Head of caudate nucleus (tissue), 42 donors: ENCODE measurements at regions of chr16 and their contacts with region 1.

Region 1: GRCh38 chr16:56324406-56324805 is 100.9 kb downstream of the AMFR start:
- DNase-seq: peak in 4 of 42 donors; percentile 44 to 72 (median 60)

Region 2: DNA sequence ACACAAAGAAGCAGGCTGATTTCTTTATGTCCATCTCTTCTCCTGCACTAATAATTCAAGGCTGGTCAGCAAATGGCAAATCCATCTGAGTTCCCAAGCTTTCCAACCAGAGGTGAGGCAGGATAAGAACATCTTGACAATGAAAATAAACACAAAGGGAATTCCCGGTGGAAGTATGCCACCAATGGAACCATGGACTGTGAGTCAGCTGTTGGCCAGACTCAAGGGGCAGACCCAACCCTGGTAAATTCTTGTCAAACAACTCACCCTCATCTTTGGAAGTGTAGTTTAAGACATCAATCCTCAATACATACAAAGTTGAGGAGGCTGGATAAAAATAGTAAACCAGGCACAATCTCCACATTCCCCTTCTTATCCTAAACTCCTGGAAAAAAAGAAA is 374.9 kb before region 1 on chr16:
- intact Hi-C with region 1: loop called (anchors 5 kb)
- DNase-seq: no peak

Region 3: GRCh38 chr16:56041686-56042085 is 282.7 kb before region 1 on chr16:
- intact Hi-C with region 1: loop called (anchors 10 kb)
- DNase-seq: peak in 33 of 42 donors; percentile 5 to 64 (median 27)

Region 4: GRCh38 chr16:57810197-57811031 is 1486.0 kb after region 1 on chr16:
- intact Hi-C with region 1: no loop called
- DNase-seq: peak in 40 of 42 donors; percentile 35 to 86 (median 54)